Activated CD4-positive, alpha-beta T cell treated with anti-CD3 and anti-CD28 coated beads for 36 hours (primary cell): ENCODE measurements at regions of chr6 and their contacts with region 1.

Region 1: GRCh38 chr6:90274451-90275030 is 22.1 kb downstream of the BACH2 start:
- DNase-seq: peak; percentile 96
- ATAC-seq: peak; percentile 89
- H3K4me3 Mint-ChIP-seq: peak overlapping the region; percentile 54
- H3K27ac Mint-ChIP-seq: peak overlapping the region; percentile 90
- H3K4me1 Mint-ChIP-seq: peaks cover 95% of the 10 kb centered on the region
- H3K27me3 Mint-ChIP-seq: no peaks in the 10 kb centered on the region

Region 2: GRCh38 chr6:90008908-90009501 is 265.5 kb before region 1 on chr6:
- CTCF ChIA-PET with region 1: no interaction called
- POLR2A ChIA-PET with region 1: no interaction called
- intact Hi-C with region 1: loop called in 1 of 2 experiments (anchors 5 kb)
- DNase-seq: peak; percentile 54
- ATAC-seq: peak; percentile 82
- H3K4me3 Mint-ChIP-seq: peak overlapping the region; percentile 18
- H3K27ac Mint-ChIP-seq: peak overlapping the region; percentile 95
- H3K4me1 Mint-ChIP-seq: peaks cover 68% of the 10 kb centered on the region
- H3K27me3 Mint-ChIP-seq: no peaks in the 10 kb centered on the region

Region 3: GRCh38 chr6:90131614-90132423 is 142.7 kb before region 1 on chr6:
- CTCF ChIA-PET with region 1: no interaction called
- POLR2A ChIA-PET with region 1: no interaction called
- intact Hi-C with region 1: no loop called
- DNase-seq: no peak
- ATAC-seq: peak; percentile 49
- H3K4me3 Mint-ChIP-seq: no peak overlapping the region
- H3K27ac Mint-ChIP-seq: peak overlapping the region; percentile 37
- H3K4me1 Mint-ChIP-seq: peaks cover 61% of the 10 kb centered on the region
- H3K27me3 Mint-ChIP-seq: no peaks in the 10 kb centered on the region

Region 4: DNA sequence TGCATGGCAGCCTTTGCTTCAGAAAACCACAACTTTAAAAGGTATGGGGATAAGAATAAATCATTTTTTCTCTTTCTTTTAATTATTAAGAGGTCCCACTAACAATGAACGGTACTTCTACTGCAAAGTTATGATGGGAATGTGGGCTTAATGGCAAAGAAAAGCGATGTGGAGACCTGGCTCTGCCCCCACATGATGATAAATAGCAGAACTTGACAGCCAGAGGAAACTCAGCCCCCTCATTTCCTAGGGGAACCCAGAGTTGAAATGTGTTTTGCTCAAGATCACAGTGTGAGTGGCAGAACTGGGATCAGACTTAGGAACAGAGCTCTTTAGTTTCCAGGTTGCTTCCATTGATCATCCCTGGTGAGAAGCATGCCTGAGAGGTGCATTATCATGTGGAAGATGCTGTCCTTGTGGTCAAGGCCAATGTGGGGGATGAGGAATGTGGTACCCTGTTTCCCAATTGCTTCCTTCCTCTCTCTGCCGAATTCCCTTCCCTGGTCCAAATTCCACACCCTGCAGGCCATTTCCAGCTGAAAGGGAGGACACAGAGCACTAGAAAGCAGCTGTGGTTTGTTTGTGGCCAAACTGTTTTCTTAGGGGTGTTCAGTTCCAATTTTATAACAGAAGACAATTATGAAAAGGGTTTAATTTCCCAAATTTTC is 43.9 kb before region 1 on chr6:
- CTCF ChIA-PET with region 1: no interaction called
- POLR2A ChIA-PET with region 1: no interaction called
- intact Hi-C with region 1: loop called in 1 of 2 experiments (anchors 1 kb)
- DNase-seq: no peak
- ATAC-seq: no peak
- H3K4me3 Mint-ChIP-seq: no peak overlapping the region
- H3K27ac Mint-ChIP-seq: peak overlapping the region; percentile 59
- H3K4me1 Mint-ChIP-seq: peaks cover 94% of the 10 kb centered on the region
- H3K27me3 Mint-ChIP-seq: no peaks in the 10 kb centered on the region

Region 5: GRCh38 chr6:90263633-90264032 is 10.9 kb before region 1 on chr6:
- CTCF ChIA-PET with region 1: interaction called, 19 read pairs
- POLR2A ChIA-PET with region 1: interaction called, 4 read pairs
- intact Hi-C with region 1: no loop called
- DNase-seq: no peak
- ATAC-seq: no peak
- H3K4me3 Mint-ChIP-seq: no peak overlapping the region
- H3K27ac Mint-ChIP-seq: peak overlapping the region; percentile 73
- H3K4me1 Mint-ChIP-seq: peaks cover 94% of the 10 kb centered on the region
- H3K27me3 Mint-ChIP-seq: no peaks in the 10 kb centered on the region

Region 6: GRCh38 chr6:90413867-90414266 is 139.3 kb after region 1 on chr6:
- CTCF ChIA-PET with region 1: interaction called, 3 read pairs
- POLR2A ChIA-PET with region 1: no interaction called
- intact Hi-C with region 1: loop called in 1 of 2 experiments (anchors 1 kb)
- DNase-seq: peak; percentile 91
- ATAC-seq: peak; percentile 51
- H3K4me3 Mint-ChIP-seq: peak overlapping the region; percentile 67
- H3K27ac Mint-ChIP-seq: peak overlapping the region; percentile 93
- H3K4me1 Mint-ChIP-seq: peaks cover 72% of the 10 kb centered on the region
- H3K27me3 Mint-ChIP-seq: no peaks in the 10 kb centered on the region